HCT116 (cell line): ENCODE measurements at regions of chr21 and their contacts with region 1.

Region 1: DNA sequence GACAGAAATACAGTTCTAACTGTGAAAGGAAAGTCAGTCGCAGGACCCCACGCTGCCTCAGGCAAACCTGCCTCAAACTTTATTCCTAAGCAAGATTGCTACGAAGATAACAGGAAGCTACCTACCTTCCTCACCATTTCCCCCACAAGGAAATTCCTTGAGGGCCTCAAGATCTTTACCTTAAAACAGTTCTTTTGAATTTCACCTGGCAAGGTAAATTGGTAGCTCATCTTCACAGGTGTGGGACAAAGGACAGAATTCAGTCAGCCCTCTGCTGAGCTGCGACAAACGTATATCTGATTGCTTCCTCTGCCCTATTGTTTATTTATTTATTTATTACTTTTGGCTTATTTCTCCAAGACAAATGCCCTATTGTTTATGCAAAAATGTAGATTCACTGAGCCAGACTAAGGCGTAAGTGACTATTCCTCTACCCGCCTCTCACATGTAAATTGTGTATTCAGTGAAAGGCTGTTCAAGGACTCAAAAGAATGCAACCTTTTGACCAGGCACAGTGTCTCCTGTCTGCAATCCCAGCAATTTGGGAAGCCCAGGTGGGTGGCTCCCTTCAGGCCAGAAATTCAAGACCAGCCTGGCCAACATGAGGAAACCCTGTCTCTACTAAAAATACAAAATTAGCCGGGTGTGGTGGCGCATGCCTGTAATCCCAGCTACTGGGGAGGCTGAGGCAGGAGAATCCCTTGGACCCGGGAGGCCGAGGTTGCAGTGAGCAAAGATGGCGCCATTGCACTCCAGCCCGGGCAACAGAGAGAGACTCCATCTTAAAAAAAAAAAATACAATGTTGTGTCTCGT is 17.3 kb upstream of the PKNOX1 start:
- DNase-seq: no peak
- ATAC-seq: no peak
- H3K4me3 ChIP-seq: no peak overlapping the region; a peak in 1 of 4 replicates
- H3K27ac ChIP-seq: peak overlapping the region; percentile 91
- H3K4me1 ChIP-seq: peaks cover 32 to 34% of the 10 kb centered on the region in 2 experiments
- H3K27me3 ChIP-seq: no peaks in the 10 kb centered on the region
- CTCF ChIP-seq: no peak
- POLR2A ChIP-seq: no peak
- RAD21 ChIP-seq: no peak

Region 2: DNA sequence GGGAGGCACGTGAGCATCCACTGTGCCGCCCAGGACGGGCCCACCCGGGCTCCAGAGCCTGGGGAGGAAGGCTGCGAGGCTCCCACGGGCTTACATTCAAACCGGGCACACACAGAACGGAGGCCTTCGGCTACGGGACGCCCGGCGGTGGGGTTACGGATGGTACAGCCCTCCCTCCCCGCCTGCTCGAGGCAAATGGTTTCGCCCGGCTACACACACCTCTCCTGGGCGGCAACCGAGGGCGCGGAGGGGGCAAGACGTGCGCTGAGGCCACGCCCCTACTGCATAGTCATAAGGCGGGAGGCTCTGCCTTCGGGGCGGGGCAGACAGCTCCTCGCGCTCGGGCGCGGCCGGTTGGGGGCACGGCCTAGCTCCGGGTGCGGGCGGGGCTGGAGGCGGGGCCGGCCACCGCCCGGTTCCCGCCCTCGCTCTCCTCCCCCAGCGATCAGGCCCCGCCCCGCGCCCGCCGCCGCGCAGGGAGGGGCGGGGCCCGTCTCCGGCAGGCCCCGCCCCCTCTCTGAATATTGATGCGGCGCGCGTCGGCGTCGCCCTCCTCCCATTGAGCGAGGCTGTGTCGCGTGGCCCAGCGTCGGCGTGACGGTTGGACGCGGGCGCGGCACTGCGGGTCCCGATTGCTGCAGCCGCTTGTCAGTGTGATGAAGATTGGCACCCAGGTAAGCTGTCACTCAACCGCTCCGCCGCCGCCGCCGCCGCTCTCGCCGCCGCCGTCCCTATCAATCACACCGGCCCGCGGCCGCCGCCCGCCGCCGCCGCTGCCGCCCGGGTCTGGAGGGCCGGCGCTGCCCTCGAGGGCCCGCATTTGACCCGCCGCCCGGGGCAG is 17.2 kb after region 1 on chr21 and contains the start of gene PKNOX1:
- CTCF ChIA-PET with region 1: no interaction called
- POLR2A ChIA-PET with region 1: interaction called, 7 read pairs
- RAD21 ChIA-PET with region 1: no interaction called
- intact Hi-C with region 1: loop called (anchors 1 kb)
- DNase-seq: peak; percentile 96
- ATAC-seq: peak; percentile 89
- H3K4me3 ChIP-seq: peak within 1 kb of the TSS; percentile 72 to 81
- H3K27ac ChIP-seq: peak within 1 kb of the TSS; percentile 87
- H3K4me1 ChIP-seq: peaks cover 10 to 22% of the 10 kb centered on the region in 2 experiments; a peak in 3 of 4 replicates
- H3K27me3 ChIP-seq: no peaks in the 10 kb centered on the region
- CTCF ChIP-seq: no peak
- POLR2A ChIP-seq: peak; percentile 31
- RAD21 ChIP-seq: no peak
- total RNA-seq, gene PKNOX1: 12.7 TPM